Prostate gland (tissue), 2 donors: ENCODE measurements at regions of chr1 and their contacts with region 1.

Region 1: GRCh38 chr1:71049951-71050598 is 2.5 kb upstream of the PTGER3 start:
- DNase-seq: peak; percentile 32
- H3K4me3 ChIP-seq: no peak overlapping the region
- H3K27ac ChIP-seq: no peak overlapping the region
- H3K4me1 ChIP-seq: no peaks in the 10 kb centered on the region
- H3K27me3 ChIP-seq: no peaks in the 10 kb centered on the region
- CTCF ChIP-seq: peak; percentile 19 to 74 (median 60)
- POLR2A ChIP-seq: no peak

Region 2: GRCh38 chr1:70528590-70529333 is 521.3 kb before region 1 on chr1:
- intact Hi-C with region 1: loop called (anchors 5 kb)
- DNase-seq: peak; percentile 8
- H3K4me3 ChIP-seq: no peak overlapping the region
- H3K27ac ChIP-seq: no peak overlapping the region
- H3K4me1 ChIP-seq: no peaks in the 10 kb centered on the region
- H3K27me3 ChIP-seq: no peaks in the 10 kb centered on the region
- CTCF ChIP-seq: peak in 3 of 4 experiments; percentile 24 to 44 (median 31)
- POLR2A ChIP-seq: no peak

Region 3: GRCh38 chr1:70685300-70686241 is 364.5 kb before region 1 on chr1:
- intact Hi-C with region 1: loop called (anchors 2 kb)
- DNase-seq: peak; percentile 27
- H3K4me3 ChIP-seq: no peak overlapping the region
- H3K27ac ChIP-seq: no peak overlapping the region
- H3K4me1 ChIP-seq: no peaks in the 10 kb centered on the region
- H3K27me3 ChIP-seq: no peaks in the 10 kb centered on the region
- CTCF ChIP-seq: peak; percentile 47 to 57 (median 54)
- POLR2A ChIP-seq: no peak